ENCODE measurements at regions of chr7 and their contacts with region 1.

Region 1: DNA sequence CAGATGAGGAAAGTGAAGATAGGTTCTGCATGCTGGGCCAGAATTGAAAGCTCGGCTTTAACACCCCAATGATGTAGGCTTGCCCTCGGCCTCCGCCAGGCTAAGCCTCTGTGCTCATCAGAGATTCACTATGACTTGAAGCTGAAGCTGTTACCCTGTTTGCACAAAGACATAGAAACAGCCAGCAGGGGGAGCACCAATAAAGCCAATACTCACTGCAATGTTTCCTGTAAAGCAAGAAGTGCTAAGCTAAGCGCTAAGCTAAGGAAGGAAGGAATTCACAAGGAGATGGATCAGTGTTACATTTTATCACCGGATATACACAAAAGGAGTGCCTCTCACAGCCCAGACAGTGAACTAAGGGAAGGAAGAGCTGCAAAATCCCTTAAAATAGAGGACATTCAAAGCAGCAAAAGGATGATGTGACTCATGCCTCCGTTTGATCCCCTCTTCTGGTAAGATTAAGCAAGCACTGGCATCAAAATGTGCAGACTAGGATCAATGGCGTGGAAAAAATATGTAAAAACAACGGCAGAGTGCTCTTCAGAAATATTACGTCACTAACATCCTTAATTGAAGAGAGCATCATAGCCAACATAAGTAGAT is 153.8 kb downstream of the COBL start:
- DNase-seq: peak; percentile 79
- H3K4me3 ChIP-seq: no peak overlapping the region
- H3K27ac ChIP-seq: no peak overlapping the region
- H3K4me1 ChIP-seq: peaks cover 0 to 10% (median 0%) of the 10 kb centered on the region in 4 donors
- H3K27me3 ChIP-seq: no peaks in the 10 kb centered on the region
- CTCF ChIP-seq: peak; percentile 34 to 75 (median 68)
- EP300 ChIP-seq: no peak
- POLR2A ChIP-seq: no peak

Region 2: DNA sequence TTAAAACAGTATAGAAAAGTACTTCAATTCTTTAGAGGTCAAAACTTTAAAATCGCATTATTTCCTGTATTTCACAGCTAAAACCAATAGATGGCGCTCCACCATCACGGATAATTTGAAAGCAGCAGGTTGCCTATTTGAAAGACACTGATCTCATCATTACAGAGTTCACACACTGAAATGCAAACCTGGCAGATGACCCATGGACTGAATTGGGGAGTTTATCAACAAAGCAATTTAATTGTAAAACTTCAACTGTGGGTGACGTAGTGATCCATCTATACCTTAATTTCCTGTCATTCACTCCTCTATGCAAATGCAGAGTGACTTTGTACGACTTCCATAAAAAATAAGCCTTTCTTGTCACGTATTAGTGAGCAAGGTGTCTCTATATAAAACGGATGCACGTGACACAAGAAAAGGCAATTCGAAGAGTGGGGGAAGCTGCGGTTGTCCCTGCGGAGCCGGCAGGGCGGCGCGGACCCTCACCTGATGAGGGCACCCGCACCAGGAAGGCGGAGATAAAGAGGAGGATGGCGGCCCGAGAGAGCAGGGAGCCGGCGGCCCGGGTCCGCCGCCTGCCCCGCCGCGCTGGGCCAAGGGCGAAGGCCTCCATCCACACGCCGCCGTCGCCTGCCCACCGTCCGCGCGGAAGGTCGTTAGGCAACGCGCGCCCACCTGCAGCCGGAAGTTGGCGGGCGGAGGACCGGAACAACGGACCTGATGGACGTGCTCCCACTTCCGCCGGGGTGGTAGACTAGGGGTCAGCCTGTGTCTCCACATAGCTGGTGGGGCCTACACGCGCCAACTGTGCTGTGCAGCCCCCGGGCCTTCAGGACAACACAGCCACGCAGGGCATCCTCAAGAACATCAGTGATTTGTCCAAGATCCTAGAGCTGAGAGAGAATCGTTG is 1070.0 kb before region 1 on chr7 and contains the start of gene ZPBP:
- intact Hi-C with region 1: loop called (anchors 2 kb)
- DNase-seq: no peak
- H3K4me3 ChIP-seq: peak within 1 kb of the TSS; percentile 14 to 53 (median 43)
- H3K27ac ChIP-seq: no peak within 1 kb of the TSS
- H3K4me1 ChIP-seq: peaks cover 0 to 9% (median 7%) of the 10 kb centered on the region in 4 donors
- H3K27me3 ChIP-seq: no peaks in the 10 kb centered on the region
- CTCF ChIP-seq: peak; percentile 7 to 68 (median 56)
- EP300 ChIP-seq: no peak
- POLR2A ChIP-seq: no peak
- total RNA-seq, gene ZPBP: not detected

Region 3: GRCh38 chr7:50142425-50143017 is 1020.3 kb before region 1 on chr7:
- intact Hi-C with region 1: loop called (anchors 1 kb)
- DNase-seq: no peak
- H3K4me3 ChIP-seq: no peak overlapping the region
- H3K27ac ChIP-seq: no peak overlapping the region
- H3K4me1 ChIP-seq: no peaks in the 10 kb centered on the region
- H3K27me3 ChIP-seq: no peaks in the 10 kb centered on the region
- CTCF ChIP-seq: peak in 3 of 4 experiments; percentile 33 to 72 (median 38)
- EP300 ChIP-seq: no peak
- POLR2A ChIP-seq: no peak

Region 4: DNA sequence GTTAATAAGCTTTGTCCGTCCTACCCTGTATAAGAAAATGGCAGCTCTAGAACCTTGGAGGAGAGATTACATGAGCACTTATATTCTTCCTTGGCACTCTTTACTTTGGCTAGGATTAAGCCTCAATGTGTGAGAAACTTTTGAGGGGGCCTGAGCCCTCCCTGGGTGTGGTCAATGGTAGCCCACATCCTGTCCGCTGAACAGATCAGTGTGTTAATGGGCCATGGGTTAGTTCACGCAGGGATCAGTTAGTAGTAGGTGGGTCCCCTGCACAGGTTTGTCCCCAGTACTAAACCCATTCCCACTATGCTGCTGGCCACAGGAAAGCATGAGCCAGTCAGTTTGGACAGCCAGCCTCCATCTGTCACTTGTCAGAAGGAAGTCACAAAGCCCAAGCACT is 878.5 kb before region 1 on chr7:
- intact Hi-C with region 1: no loop called
- DNase-seq: no peak
- H3K4me3 ChIP-seq: no peak overlapping the region
- H3K27ac ChIP-seq: no peak overlapping the region
- H3K4me1 ChIP-seq: no peaks in the 10 kb centered on the region
- H3K27me3 ChIP-seq: no peaks in the 10 kb centered on the region
- CTCF ChIP-seq: no peak
- EP300 ChIP-seq: no peak
- POLR2A ChIP-seq: no peak

Region 5: GRCh38 chr7:50467817-50468610 is 694.8 kb before region 1 on chr7:
- intact Hi-C with region 1: loop called (anchors 1 kb)
- DNase-seq: peak; percentile 93
- H3K4me3 ChIP-seq: peak overlapping the region in 2 of 4 donors; percentile 16 to 24
- H3K27ac ChIP-seq: peak overlapping the region in 1 of 4 donors; percentile 24
- H3K4me1 ChIP-seq: peaks cover 0 to 13% (median 10%) of the 10 kb centered on the region in 4 donors
- H3K27me3 ChIP-seq: peaks cover 0 to 4% (median 0%) of the 10 kb centered on the region in 3 donors
- CTCF ChIP-seq: peak; percentile 79 to 92 (median 86)
- EP300 ChIP-seq: no peak
- POLR2A ChIP-seq: no peak

Region 6: DNA sequence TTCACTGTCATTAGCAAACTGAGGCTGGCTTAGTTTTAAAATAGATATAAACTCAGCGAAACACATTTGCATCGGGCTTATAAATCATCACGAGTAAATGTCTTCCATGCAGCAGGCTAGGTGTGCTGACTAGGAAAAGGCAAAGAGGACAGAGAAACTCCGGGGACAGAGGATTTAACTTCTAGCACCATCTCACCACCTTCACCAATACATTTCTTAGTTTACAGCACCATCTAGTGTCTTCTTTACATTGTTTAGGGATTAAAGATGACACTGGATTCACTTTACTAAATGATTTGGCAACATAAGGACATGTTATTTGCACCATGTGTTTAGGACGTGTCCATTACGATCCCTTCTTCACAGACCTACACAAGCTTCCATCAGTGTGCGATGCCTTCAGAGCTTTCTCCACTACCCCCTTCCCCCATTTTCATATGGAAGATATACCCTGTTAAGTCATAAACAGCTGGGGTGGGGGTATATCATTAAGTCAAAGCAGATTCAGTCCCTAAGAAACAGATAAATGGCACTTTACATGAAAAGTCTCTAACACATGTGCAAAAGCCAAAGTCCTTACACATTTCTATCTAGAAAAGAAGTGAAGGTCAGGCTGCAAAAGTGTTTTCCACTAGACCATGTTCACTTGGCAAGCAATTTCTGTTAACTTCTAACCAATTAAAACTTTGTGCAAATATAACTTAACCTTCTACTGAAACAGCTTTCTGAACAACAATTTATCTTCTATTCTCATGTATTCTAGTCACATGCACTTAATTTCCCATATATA is 483.4 kb before region 1 on chr7:
- intact Hi-C with region 1: loop called (anchors 5 kb)
- DNase-seq: no peak
- H3K4me3 ChIP-seq: no peak overlapping the region
- H3K27ac ChIP-seq: peak overlapping the region in 3 of 4 donors; percentile 76 to 91 (median 87)
- H3K4me1 ChIP-seq: peaks cover 0 to 87% (median 81%) of the 10 kb centered on the region in 4 donors
- H3K27me3 ChIP-seq: no peaks in the 10 kb centered on the region
- CTCF ChIP-seq: peak in 3 of 4 experiments; percentile 28 to 39 (median 36)
- EP300 ChIP-seq: no peak
- POLR2A ChIP-seq: no peak

Region 7: DNA sequence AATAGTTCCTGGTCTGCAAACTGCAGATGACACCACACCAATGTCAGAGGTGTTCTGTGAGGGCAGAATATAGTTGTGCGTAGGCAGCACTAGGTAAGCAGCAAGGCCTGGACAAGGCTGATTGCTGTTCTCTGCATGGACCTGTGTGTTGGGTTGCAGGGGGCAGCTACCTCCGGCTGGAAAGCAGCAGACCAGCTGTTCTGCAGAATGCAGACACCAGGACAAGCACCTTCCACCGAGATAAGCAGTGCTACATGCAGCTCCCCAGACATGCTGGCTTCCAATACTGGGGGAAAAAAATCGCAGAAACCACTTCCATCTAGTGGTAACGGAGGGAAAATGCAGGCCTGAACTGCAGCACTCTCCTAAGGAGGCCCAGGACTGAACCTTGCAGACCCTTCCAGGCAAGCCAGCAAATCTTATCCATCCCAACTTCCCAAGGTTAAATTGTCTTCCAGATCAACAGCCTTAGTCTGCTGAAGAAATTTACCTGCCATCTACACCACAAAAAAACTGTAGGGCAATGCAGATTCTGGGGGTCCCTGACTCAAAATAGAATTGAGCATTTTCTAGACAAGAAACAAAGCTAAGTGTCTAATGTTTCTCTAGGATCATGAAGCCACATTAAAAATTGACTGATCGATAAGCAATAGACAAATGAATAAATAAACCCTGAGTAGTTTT is 204.2 kb after region 1 on chr7:
- intact Hi-C with region 1: loop called (anchors 1 kb)
- DNase-seq: no peak
- H3K4me3 ChIP-seq: no peak overlapping the region
- H3K27ac ChIP-seq: no peak overlapping the region
- H3K4me1 ChIP-seq: no peaks in the 10 kb centered on the region
- H3K27me3 ChIP-seq: no peaks in the 10 kb centered on the region
- CTCF ChIP-seq: peak in 3 of 4 experiments; percentile 49 to 60 (median 55)
- EP300 ChIP-seq: no peak
- POLR2A ChIP-seq: no peak

Region 8: DNA sequence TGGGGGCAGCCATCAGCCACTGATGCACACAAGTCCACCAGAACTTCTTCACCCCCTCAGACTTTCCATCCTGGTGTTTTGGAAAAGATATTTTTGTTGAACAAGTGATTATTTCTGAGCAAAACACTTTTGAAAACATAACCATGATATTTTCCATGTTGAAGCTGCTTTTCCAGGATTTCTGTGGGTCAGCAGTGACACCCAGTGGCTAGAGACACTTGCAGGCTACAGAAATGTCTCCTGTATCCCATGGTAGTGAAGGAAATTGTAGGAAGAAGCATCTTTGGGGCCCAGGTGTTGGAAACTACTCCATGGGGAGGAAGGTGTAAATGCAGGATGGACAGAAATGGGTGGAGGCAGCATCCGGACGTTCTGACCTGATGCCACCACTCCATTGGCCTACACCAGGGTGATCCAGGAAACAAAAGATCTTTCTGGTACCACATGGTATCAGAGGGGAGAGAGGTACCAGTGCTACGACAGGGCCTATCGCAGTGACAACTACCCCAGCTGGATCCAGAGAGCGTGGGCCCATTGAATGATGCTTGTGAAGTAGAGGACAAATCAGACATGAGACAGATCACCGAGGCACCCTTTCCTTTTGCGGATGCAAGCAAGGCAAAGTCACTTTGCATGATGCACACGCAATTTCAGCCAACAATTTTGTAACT is 265.5 kb after region 1 on chr7:
- intact Hi-C with region 1: no loop called
- DNase-seq: no peak
- H3K4me3 ChIP-seq: no peak overlapping the region
- H3K27ac ChIP-seq: no peak overlapping the region
- H3K4me1 ChIP-seq: peaks cover 0 to 6% (median 0%) of the 10 kb centered on the region in 4 donors
- H3K27me3 ChIP-seq: no peaks in the 10 kb centered on the region
- CTCF ChIP-seq: no peak
- EP300 ChIP-seq: no peak
- POLR2A ChIP-seq: no peak